ENCODE measurements at regions of chr17 and their contacts with region 1.

Region 1: GRCh38 chr17:73719588-73720071 is 75.4 kb upstream of the SDK2 start:
- DNase-seq: no peak
- H3K4me3 Mint-ChIP-seq: no peak overlapping the region
- H3K27ac Mint-ChIP-seq: no peak overlapping the region
- H3K4me1 Mint-ChIP-seq: peaks cover 42% of the 10 kb centered on the region
- H3K27me3 Mint-ChIP-seq: no peaks in the 10 kb centered on the region

Region 2: GRCh38 chr17:73827627-73828291 is 108.1 kb after region 1 on chr17:
- CTCF ChIA-PET with region 1: no interaction called
- intact Hi-C with region 1: loop called (anchors 5 kb)
- DNase-seq: peak; percentile 25
- H3K4me3 Mint-ChIP-seq: peak overlapping the region; percentile 2
- H3K27ac Mint-ChIP-seq: peak overlapping the region; percentile 59
- H3K4me1 Mint-ChIP-seq: peaks cover 72% of the 10 kb centered on the region
- H3K27me3 Mint-ChIP-seq: no peaks in the 10 kb centered on the region

Measured in activated naive CD4-positive, alpha-beta T cell treated with anti-CD3 and anti-CD28 coated beads for 36 hours (primary cell).